ENCODE measurements at regions of chr15 and their contacts with region 1.

Region 1: GRCh38 chr15:88897456-88898194 is 2.3 kb upstream of the HAPLN3 start:
- DNase-seq: peak; percentile 94

Region 2: GRCh38 chr15:88620995-88621772 is 276.4 kb before region 1 on chr15 and contains the start of gene AEN:
- intact Hi-C with region 1: loop called (anchors 5 kb)
- DNase-seq: peak; percentile 98
- total RNA-seq, gene AEN: 8.7 TPM

Region 3: DNA sequence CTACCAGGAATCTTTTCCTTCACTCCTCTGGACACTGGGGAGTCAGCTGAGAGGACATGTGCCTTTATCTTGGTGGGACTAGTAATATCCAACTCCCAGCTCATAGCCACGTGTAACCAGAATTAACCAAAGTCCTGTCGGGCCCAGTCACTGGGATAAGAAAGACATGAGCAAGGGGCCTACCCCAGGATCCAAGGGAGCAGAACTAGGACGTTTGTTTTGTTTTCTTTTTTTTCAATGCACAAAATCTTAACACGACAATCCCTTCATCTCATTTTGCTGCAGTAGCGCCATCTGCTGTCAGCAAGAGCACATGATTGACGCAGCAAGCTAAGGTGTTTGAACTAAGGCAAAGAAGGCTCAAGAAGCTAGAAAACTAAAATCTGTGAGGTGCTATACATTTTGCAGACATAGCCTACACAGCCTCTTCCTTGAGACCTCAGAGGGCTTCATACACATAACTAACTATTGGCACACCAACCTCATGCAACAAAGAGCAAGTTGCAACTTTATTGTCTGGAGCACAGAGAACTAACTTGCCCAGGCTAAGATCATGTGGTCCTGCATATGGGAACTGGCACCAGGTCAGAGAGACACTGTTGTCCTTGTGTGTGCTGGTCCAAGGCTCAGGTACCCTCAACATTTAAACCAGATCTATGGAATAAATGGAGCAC is 280.1 kb after region 1 on chr15:
- intact Hi-C with region 1: loop called (anchors 2 kb)
- DNase-seq: no peak

Measured in cardiac septum (tissue), 1 donor.